Activated naive CD4-positive, alpha-beta T cell treated with anti-CD3 and anti-CD28 coated beads for 36 hours (primary cell): ENCODE measurements at regions of chr12 and their contacts with region 1.

Region 1: DNA sequence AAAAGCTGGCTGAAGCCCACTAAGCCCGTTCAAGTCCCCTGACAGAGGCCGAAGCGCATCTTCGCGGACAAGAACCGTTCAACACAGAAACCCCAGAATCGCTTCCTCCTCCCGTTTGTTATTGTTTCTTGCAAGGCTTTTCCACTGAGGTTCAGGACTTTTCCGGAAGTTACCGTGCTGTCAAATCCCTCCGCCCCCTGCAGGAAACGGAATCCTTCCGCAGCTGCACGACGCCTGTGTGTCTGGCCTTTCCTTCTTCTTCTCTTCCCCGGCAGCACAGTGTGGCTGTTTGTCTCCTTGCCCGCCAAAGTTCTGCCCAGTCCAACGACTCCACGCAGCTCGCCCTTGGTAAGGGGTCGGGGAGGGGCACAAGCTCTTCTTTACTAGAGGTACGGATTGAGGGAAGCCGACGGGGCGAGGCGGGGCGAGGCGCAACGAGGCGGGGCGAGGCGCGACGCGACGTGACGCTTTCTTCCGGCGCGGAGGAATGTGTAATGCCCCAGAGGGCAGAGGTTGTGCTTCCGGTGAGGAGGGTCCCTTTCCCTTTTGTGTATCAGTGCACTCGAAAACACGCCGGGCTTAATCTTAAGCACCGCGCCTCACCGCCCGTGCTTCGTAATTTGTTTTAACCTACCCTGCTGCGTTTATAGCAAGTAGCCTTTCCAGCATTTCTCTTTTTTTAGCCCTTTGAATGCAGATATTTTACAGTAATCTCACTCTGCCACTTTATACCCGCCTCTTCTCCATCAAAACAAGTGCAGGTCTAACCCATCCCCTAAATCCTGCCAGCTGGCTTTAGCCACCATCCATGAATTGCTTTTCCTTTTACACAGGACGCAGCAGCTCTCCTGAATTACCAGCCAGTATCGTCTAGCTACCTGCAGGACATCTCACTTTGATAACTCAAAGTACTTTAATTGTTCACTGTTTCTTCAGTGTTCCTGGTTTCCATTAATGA is at the start of gene KDM5A:
- DNase-seq: peak; percentile 94
- H3K4me3 Mint-ChIP-seq: peak within 1 kb of the TSS; percentile 96
- H3K27ac Mint-ChIP-seq: peak within 1 kb of the TSS; percentile 98
- H3K4me1 Mint-ChIP-seq: peaks cover 37% of the 10 kb centered on the region
- H3K27me3 Mint-ChIP-seq: no peaks in the 10 kb centered on the region
- total RNA-seq, gene KDM5A: 59.0 to 61.3 TPM

Region 2: GRCh38 chr12:401235-402028 is 12.0 kb after region 1 on chr12 and contains the start of gene CCDC77:
- CTCF ChIA-PET with region 1: interaction called, 15 read pairs
- intact Hi-C with region 1: loop called (anchors 1 kb)
- DNase-seq: peak; percentile 96
- H3K4me3 Mint-ChIP-seq: no peak within 1 kb of the TSS
- H3K27ac Mint-ChIP-seq: no peak within 1 kb of the TSS
- H3K4me1 Mint-ChIP-seq: peaks cover 3% of the 10 kb centered on the region
- H3K27me3 Mint-ChIP-seq: no peaks in the 10 kb centered on the region
- total RNA-seq, gene CCDC77: 13.2 to 14.9 TPM

Region 3: GRCh38 chr12:468671-469389 is 79.4 kb after region 1 on chr12:
- CTCF ChIA-PET with region 1: no interaction called
- intact Hi-C with region 1: no loop called
- DNase-seq: no peak
- H3K4me3 Mint-ChIP-seq: no peak overlapping the region
- H3K27ac Mint-ChIP-seq: no peak overlapping the region
- H3K4me1 Mint-ChIP-seq: no peaks in the 10 kb centered on the region
- H3K27me3 Mint-ChIP-seq: no peaks in the 10 kb centered on the region

Region 4: DNA sequence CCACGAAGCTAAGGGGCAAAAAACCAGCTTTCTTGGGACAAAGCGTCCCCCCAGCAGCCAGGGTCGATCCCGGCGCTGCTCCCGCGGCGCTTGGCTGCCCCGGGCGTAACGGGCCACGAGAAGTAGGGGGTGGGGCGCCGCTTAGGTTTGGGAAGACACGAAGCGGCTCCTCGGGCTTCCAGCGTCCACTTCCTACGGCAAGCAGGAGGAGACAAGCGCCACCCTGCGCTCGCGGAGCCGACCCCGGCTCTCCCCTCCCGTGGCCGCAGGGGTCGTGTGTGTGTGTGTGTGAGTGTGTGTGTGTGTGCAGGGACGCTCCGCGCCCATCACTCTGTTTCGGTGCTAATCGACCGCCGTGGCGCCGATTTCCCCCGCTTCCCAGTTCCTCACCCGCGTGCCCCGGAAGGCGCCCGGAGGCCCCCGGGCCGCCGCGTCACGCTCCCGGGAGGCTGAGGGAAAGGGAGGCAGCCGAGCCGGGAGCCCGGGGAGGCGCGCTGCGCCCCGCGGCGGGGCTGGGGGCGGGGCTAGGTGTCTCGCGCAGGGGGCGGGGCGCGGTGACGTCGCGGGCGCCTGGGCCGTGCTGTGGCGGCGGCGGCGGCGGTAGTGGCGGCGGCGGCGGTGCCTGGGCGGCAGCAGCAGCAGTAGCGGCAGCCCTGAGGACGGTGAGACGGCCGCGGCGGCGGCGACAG is 601.4 kb after region 1 on chr12 and contains the start of gene ERC1:
- CTCF ChIA-PET with region 1: no interaction called
- intact Hi-C with region 1: loop called (anchors 2 kb)
- DNase-seq: peak; percentile 83
- H3K4me3 Mint-ChIP-seq: peak within 1 kb of the TSS; percentile 86
- H3K27ac Mint-ChIP-seq: peak within 1 kb of the TSS; percentile 77
- H3K4me1 Mint-ChIP-seq: peaks cover 32% of the 10 kb centered on the region
- H3K27me3 Mint-ChIP-seq: no peaks in the 10 kb centered on the region
- total RNA-seq, gene ERC1: 17.4 to 20.7 TPM

Region 5: GRCh38 chr12:2004113-2004929 is 1614.9 kb after region 1 on chr12 and contains the start of gene DCP1B:
- CTCF ChIA-PET with region 1: no interaction called
- intact Hi-C with region 1: loop called (anchors 10 kb)
- DNase-seq: peak; percentile 98
- H3K4me3 Mint-ChIP-seq: peak within 1 kb of the TSS; percentile 88
- H3K27ac Mint-ChIP-seq: peak within 1 kb of the TSS; percentile 96
- H3K4me1 Mint-ChIP-seq: peaks cover 23% of the 10 kb centered on the region
- H3K27me3 Mint-ChIP-seq: no peaks in the 10 kb centered on the region
- total RNA-seq, gene DCP1B: 13.1 to 13.5 TPM